ENCODE measurements at regions of chr12 and their contacts with region 1.

Region 1: GRCh38 chr12:104286538-104287482 is 16.7 kb upstream of the EID3 start:
- DNase-seq: peak; percentile 90
- H3K4me3 Mint-ChIP-seq: peak overlapping the region; percentile 98
- H3K27ac Mint-ChIP-seq: peak overlapping the region; percentile 99
- H3K4me1 Mint-ChIP-seq: peaks cover 27% of the 10 kb centered on the region
- H3K27me3 Mint-ChIP-seq: no peaks in the 10 kb centered on the region

Region 2: GRCh38 chr12:103930034-103930786 is 356.6 kb before region 1 on chr12 and contains the start of gene HSP90B1:
- intact Hi-C with region 1: loop called (anchors 2 kb)
- DNase-seq: peak; percentile 100
- H3K4me3 Mint-ChIP-seq: peak within 1 kb of the TSS; percentile 91
- H3K27ac Mint-ChIP-seq: peak within 1 kb of the TSS; percentile 99
- H3K4me1 Mint-ChIP-seq: peaks cover 73% of the 10 kb centered on the region
- H3K27me3 Mint-ChIP-seq: peaks cover 6% of the 10 kb centered on the region
- total RNA-seq, gene HSP90B1: 427 and 446 TPM in 2 replicates

Region 3: GRCh38 chr12:104137913-104138796 is 148.7 kb before region 1 on chr12 and contains the start of gene NFYB:
- intact Hi-C with region 1: loop called (anchors 1 kb)
- DNase-seq: peak; percentile 91
- H3K4me3 Mint-ChIP-seq: peak within 1 kb of the TSS; percentile 87
- H3K27ac Mint-ChIP-seq: peak within 1 kb of the TSS; percentile 88
- H3K4me1 Mint-ChIP-seq: peaks cover 16% of the 10 kb centered on the region
- H3K27me3 Mint-ChIP-seq: peaks cover 7% of the 10 kb centered on the region
- total RNA-seq, gene NFYB: 25.0 and 25.2 TPM in 2 replicates

Region 4: GRCh38 chr12:104303538-104304151 is 16.8 kb after region 1 on chr12 and contains the start of gene EID3:
- intact Hi-C with region 1: loop called (anchors 1 kb)
- DNase-seq: peak; percentile 92
- H3K4me3 Mint-ChIP-seq: peak within 1 kb of the TSS; percentile 93
- H3K27ac Mint-ChIP-seq: peak within 1 kb of the TSS; percentile 99
- H3K4me1 Mint-ChIP-seq: peaks cover 66% of the 10 kb centered on the region
- H3K27me3 Mint-ChIP-seq: no peaks in the 10 kb centered on the region
- total RNA-seq, gene EID3: 10.5 and 10.6 TPM in 2 replicates

Region 5: GRCh38 chr12:104314242-104314614 is 27.4 kb after region 1 on chr12:
- intact Hi-C with region 1: no loop called
- DNase-seq: no peak
- H3K4me3 Mint-ChIP-seq: no peak overlapping the region
- H3K27ac Mint-ChIP-seq: no peak overlapping the region
- H3K4me1 Mint-ChIP-seq: peaks cover 6% of the 10 kb centered on the region
- H3K27me3 Mint-ChIP-seq: no peaks in the 10 kb centered on the region

Region 6: DNA sequence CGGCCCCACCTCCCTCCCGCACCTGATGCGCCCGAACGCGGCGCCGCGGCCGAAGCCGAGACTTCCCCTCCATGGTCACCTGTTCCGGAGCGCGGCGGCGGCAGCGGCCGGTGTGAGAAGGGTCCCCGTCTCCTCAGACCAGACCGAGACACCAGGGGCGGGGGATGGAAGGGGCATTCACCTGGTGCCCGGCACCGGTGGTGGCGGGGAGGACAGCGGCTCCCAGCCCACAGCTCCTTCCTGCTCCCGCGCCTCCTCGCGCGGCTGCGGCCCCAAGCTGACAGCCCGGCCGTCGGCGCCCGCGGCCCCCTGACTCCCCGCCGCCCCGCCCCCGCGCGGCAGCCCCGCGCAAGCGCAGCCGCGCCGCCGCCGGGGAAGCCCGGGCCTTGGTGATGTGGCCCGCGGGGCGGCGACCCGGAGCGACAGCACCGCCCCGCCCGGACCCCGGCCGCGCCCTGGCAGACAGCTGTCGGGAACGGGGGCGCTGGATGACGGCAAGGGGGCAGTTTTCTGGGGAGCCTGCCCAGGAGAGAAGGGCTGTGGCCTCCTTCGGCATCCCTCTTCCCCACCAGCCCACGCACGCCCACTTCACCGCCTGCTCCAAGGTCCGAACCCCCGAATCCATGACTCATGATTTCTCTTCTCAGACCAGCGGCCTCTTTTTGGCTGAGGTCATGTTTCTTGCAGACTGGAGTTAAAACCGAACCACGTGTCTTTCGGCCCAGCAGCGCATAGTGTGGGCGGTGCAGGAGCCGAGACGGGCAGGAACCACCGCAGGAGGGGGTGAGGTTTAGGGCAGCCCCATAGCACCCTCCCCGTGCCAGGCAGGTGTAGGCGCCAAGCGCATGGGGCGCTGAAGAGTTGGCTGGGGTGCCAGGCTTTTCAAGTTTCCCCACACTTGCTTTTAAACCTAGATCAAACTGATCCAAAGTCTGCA is 671.5 kb after region 1 on chr12 and contains the start of gene SLC41A2:
- intact Hi-C with region 1: loop called (anchors 2 kb)
- DNase-seq: peak; percentile 80
- H3K4me3 Mint-ChIP-seq: peak within 1 kb of the TSS; percentile 90
- H3K27ac Mint-ChIP-seq: peak within 1 kb of the TSS; percentile 96
- H3K4me1 Mint-ChIP-seq: peaks cover 44% of the 10 kb centered on the region
- H3K27me3 Mint-ChIP-seq: peaks cover 24% of the 10 kb centered on the region
- total RNA-seq, gene SLC41A2: 16.4 and 19.0 TPM in 2 replicates

Region 7: DNA sequence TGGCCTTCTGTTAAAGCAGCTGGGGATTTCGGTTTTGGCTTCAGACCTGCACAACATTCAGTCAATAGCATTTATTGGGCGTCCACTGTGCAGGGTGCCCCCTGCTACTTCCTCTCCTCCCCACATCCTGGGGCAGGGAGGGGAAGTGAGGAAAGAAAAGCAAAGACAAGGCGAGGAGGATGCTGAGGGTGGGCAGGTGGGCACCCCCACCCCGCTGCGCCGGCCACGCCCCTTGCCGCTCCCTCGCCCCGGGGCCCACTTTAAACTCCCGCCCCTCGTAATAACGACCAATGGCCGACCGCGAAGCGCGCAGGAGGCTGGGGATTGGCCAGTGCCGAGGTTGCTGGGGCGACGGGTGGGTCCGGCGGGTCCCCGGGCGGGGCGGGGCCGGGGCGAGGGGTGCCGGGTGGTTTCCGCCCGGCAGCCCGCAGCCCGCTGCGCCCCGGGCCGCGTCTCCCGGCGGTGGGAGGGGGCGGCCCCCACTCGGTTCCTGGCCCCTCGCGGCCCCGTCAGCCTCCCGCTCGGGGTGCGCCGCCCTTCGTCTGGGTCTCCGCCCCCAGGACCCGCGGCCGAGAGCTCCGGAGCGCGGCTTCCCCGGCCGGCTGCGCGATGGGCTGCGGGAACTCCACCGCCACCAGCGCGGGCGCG is 1043.6 kb after region 1 on chr12 and contains the start of gene C12orf75:
- intact Hi-C with region 1: loop called (anchors 5 kb)
- DNase-seq: peak; percentile 93
- H3K4me3 Mint-ChIP-seq: peak within 1 kb of the TSS; percentile 87
- H3K27ac Mint-ChIP-seq: peak within 1 kb of the TSS; percentile 91
- H3K4me1 Mint-ChIP-seq: peaks cover 83% of the 10 kb centered on the region
- H3K27me3 Mint-ChIP-seq: no peaks in the 10 kb centered on the region
- total RNA-seq, gene C12orf75: 87.8 and 93.4 TPM in 2 replicates